Motor neuron (in vitro differentiated cells): ENCODE measurements at regions of chr1 and their contacts with region 1.

Region 1: DNA sequence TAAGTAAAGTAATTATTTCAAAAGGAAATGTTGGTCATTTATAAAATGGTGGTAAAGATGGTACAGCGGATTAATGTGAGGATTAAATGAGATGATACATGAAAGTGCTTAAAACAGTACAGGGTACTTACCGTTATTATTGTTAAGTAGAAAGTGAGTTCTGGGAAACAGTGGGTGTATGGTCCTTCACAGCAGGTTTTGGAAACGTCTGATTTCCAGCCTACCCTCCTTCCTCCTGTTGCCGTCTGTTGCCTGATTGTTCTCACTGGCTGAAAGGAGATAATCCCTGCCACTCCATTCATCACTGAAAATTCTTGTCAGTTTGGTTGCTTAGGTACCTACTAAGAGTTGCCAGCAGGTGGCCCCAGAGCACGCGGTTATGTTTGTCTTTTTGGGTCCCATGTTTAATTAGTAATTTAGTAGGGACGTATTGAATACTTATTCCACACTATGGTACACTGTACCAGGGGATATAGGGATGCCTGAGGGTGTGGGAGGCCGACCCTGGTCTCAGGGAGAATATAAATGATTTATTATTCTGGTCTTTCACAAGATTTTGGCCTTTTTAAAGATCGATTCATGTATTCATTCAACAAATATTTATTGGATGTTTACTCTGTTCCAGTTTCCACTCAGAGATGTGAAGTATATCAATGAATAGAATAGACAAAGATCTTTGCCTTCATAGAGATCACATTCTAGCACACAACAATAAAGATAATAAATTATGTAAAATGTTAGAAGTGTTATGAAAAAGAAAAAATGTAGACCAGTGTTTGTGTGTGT is 30.8 kb upstream of the RPTN start:
- ATAC-seq: peak in 4 of 8 experiments; percentile 12 to 60 (median 36)
- H3K4me3 ChIP-seq: no peak overlapping the region
- H3K27ac ChIP-seq: no peak overlapping the region
- H3K4me1 ChIP-seq: no peaks in the 10 kb centered on the region

Region 2: DNA sequence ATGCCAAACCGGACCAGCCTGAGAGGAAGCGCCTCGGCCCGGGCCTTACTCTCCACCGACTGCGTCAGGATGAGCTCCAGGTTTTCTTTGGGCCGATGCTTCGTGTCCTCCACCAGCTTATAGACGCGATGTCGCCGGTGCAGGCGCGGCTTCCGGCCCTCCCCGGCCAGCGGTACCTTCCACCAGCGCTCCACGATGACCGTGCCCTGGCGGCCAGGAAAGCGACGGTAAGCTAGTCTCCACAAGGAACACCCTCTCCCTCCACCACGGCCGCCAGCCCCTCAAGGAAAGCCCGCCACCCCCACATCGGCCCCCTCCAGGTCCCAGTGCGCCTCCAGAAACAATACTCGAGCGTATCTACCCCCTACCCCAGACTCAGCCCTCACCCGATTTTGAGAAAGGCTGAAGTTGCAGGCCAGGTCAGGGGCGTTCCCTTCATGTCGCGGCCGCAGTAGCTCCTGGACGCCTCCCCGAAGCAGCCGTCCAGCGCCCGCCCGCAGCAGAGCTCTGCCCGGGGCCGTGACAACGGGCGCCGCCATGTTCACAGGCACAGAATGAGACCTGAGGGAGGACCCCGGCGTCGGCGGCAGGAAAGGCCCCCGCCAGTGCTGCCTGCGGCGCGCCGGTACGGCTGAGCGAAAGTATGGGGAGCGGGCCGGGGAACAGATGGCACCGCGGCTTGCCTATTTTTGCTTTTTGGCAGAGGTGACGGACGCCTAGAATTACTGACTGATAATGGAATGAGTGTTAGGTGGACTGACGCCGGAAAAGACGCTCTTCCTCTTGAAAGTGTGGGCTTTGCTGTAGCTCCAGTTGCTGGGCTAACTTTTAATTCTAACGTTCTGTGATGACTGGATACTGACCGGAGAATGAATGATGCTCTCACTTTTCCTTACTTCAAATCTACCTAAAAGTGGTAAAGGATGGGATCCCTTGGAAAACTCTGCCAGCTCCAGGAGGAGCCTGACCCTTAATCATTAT is 426.6 kb before region 1 on chr1 and contains the start of gene MRPL9:
- in situ Hi-C with region 1: no loop called
- ATAC-seq: peak; percentile 98 to 100 (median 99)
- H3K4me3 ChIP-seq: peak within 1 kb of the TSS; percentile 86 to 97 (median 87)
- H3K27ac ChIP-seq: peak within 1 kb of the TSS; percentile 84 to 92
- H3K4me1 ChIP-seq: peaks cover 9 to 11% of the 10 kb centered on the region in 2 donors
- total RNA-seq, gene MRPL9: 63.2 to 122 (median 72.8) TPM

Region 3: GRCh38 chr1:152052606-152053005 is 137.2 kb before region 1 on chr1:
- in situ Hi-C with region 1: loop called in 1 of 9 experiments (anchors 10 kb)
- ATAC-seq: peak in 3 of 8 experiments; percentile 2 to 11 (median 2)
- H3K4me3 ChIP-seq: no peak overlapping the region
- H3K27ac ChIP-seq: no peak overlapping the region
- H3K4me1 ChIP-seq: peaks cover 0 to 10% of the 10 kb centered on the region in 2 donors

Region 4: DNA sequence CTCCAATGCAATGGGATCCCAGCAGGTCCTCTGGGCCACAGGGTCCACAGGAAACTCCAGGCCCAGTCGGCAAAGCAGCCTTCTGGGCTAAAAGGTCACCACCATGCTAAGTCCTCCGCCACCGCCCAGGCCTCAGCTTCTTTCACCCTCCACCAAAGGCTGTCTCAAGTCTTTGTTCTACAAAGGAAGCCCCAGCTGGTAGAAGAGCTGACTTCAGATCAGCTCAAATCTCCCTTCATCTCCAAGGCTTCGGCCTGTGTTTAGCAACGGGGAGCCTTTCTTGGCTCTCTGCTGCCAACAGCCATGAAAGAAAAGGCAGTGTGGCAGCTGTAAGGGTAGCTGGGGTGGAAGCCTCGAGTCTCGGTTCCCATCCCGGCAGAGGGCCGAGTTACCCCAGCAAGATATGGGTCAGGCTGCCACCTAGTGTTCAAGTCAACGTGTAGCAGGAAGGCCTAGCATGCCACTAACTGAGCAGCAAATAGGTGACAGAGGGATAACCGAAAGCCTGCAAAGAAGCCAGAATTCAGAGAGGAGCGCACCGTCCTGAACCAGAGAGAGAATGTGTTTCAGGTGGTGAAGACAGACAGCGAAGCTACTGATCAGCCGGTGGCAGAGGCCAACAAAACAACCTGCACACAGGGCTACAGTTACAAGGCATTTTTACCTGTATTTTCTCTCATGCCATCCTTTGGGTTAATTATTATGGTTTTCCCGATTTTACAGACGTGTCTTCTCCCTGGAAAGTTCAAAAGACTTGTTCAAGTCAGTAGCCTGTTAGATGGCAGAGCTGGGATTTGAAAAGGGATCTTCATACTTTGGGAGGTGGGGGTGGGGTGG is 251.0 kb after region 1 on chr1:
- in situ Hi-C with region 1: loop called in 1 of 9 experiments (anchors 5 kb)
- ATAC-seq: peak in 5 of 8 experiments; percentile 34 to 99 (median 77)
- H3K4me3 ChIP-seq: no peak overlapping the region
- H3K27ac ChIP-seq: no peak overlapping the region
- H3K4me1 ChIP-seq: no peaks in the 10 kb centered on the region

Region 5: GRCh38 chr1:152459596-152460528 is 270.0 kb after region 1 on chr1:
- in situ Hi-C with region 1: loop called in 2 of 9 experiments (anchors 25 kb)
- ATAC-seq: peak in 3 of 8 experiments; percentile 58 to 70 (median 64)
- H3K4me3 ChIP-seq: no peak overlapping the region
- H3K27ac ChIP-seq: no peak overlapping the region
- H3K4me1 ChIP-seq: no peaks in the 10 kb centered on the region